ENCODE measurements at regions of chr1 and their contacts with region 1.

Region 1: DNA sequence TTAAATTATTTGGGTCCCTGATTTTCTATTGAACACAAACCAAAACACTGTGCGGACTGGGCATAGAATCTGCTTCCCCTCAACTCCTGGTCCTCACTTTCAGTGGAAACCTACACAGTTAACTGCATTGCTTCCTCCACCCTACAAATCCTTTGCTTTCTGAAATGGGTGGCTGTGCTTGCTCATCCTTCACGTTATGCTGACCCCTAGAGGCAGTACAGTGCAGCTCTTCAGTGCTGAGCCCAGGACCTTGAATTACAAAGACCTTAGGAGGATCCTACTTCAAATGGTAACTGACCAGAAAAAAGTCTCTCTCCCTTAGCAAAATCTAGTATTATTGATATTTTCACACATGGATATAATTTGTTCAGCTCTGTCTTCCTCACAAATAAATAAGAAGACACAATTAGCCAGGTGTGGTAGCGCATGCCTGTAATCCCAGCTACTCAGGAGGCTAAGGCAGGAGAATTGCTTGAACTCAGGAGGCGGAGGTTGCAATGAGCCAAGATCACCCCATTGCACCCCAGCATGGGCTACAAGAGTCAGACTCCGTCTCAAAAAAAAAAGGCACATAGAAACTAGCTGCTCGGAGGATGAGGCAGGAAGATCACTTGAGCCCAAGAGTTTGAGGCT is 63.4 kb upstream of the L1TD1 start:
- DNase-seq: peak; percentile 53
- H3K4me3 Mint-ChIP-seq: no peak overlapping the region
- H3K27ac Mint-ChIP-seq: no peak overlapping the region
- H3K4me1 Mint-ChIP-seq: no peaks in the 10 kb centered on the region
- H3K27me3 Mint-ChIP-seq: no peaks in the 10 kb centered on the region
- CTCF ChIP-seq: peak; percentile 79

Region 2: DNA sequence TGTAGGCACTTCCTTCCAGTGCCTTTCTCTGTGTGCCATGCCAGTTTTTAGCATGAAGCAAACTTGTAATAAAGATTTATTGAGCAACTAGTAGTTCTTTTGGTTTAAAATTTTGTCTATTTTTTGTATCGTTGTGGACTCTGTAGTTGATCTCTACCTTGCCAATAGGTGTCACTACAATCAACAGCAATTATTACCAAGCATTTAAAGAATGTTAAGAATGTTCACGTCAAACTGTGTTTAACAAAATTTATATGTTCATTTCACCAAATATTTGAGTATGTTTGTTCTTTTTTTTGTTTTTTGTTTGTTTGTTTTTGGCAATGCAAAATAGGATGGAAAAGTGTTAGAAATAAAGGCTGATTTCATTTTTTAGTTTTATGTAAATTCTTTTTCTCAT is 180.8 kb before region 1 on chr1:
- CTCF ChIA-PET with region 1: no interaction called
- intact Hi-C with region 1: loop called (anchors 5 kb)
- DNase-seq: no peak
- H3K4me3 Mint-ChIP-seq: no peak overlapping the region
- H3K27ac Mint-ChIP-seq: no peak overlapping the region
- H3K4me1 Mint-ChIP-seq: peaks cover 9% of the 10 kb centered on the region
- H3K27me3 Mint-ChIP-seq: no peaks in the 10 kb centered on the region
- CTCF ChIP-seq: peak; percentile 5

Region 3: DNA sequence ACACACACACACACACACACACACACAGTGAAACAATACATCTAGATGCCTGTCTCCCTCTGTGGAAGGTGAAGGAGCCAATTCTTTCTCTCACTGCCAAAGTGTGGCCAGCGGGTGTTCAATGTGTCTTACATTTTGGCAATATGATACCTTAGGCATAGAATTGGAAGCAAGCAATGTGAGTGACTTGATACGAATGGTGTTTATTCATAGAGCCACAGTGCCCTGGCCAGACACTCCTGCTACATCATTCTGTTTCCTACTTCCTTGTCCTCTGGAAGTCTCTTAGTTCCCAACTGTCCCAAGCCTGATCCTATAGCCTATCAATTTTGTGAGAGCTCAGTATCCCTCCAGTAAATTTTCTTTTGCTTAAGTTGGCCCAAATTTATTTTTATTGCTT is 106.5 kb before region 1 on chr1:
- CTCF ChIA-PET with region 1: no interaction called
- intact Hi-C with region 1: no loop called
- DNase-seq: no peak
- H3K4me3 Mint-ChIP-seq: no peak overlapping the region
- H3K27ac Mint-ChIP-seq: no peak overlapping the region
- H3K4me1 Mint-ChIP-seq: no peaks in the 10 kb centered on the region
- H3K27me3 Mint-ChIP-seq: no peaks in the 10 kb centered on the region
- CTCF ChIP-seq: no peak

Region 4: DNA sequence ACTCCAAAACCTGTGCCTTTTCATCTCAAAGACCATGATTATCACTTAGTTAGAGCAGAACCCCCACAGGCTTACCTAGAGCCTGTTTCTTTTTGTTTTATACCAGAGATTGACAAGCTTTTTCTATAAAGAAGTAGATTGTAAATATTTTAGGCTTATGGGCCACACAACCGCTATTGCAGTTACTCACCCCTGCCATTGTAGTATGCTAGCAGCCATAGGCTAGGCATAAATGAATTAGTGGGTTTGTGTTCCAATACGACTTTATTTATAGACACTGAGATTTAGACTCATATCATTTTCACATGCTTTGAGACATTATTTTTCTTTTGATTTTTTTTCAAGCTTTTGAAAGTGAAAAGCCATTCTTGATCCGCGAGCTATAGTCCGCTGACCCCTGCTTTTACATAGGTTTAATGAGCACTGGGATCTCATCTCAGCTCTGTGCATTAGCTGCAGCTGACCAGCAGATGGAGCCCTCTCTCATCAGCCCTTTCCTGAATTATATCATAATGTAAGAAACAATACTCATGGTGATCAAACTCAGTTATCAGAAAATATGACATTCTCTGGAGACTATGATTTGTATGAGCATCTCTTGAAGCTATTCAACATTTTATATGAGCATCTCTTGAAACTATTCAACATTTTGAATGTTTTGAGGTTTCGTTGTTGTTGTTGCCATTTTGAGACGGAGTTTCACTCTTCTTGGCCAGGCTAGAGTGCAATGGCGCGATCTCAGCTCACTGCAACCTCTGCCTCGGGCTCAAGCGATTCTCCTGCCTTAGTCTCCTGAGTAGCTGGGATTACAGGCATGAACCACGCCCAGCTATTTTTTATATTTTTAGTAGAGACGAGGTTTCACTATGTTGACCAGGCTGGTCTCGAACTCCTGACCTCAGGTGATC is 48.5 kb before region 1 on chr1:
- CTCF ChIA-PET with region 1: interaction called, 8 read pairs
- intact Hi-C with region 1: loop called (anchors 1 kb)
- DNase-seq: peak; percentile 58
- H3K4me3 Mint-ChIP-seq: no peak overlapping the region
- H3K27ac Mint-ChIP-seq: no peak overlapping the region
- H3K4me1 Mint-ChIP-seq: no peaks in the 10 kb centered on the region
- H3K27me3 Mint-ChIP-seq: no peaks in the 10 kb centered on the region
- CTCF ChIP-seq: peak; percentile 85

Region 5: GRCh38 chr1:62144238-62144831 is 13.1 kb after region 1 on chr1:
- CTCF ChIA-PET with region 1: interaction called, 11 read pairs
- intact Hi-C with region 1: no loop called
- DNase-seq: peak; percentile 44
- H3K4me3 Mint-ChIP-seq: no peak overlapping the region
- H3K27ac Mint-ChIP-seq: no peak overlapping the region
- H3K4me1 Mint-ChIP-seq: peaks cover 8% of the 10 kb centered on the region
- H3K27me3 Mint-ChIP-seq: no peaks in the 10 kb centered on the region
- CTCF ChIP-seq: peak; percentile 80

Region 6: GRCh38 chr1:62230709-62231108 is 99.5 kb after region 1 on chr1:
- CTCF ChIA-PET with region 1: no interaction called
- intact Hi-C with region 1: no loop called
- DNase-seq: peak; percentile 44
- H3K4me3 Mint-ChIP-seq: no peak overlapping the region
- H3K27ac Mint-ChIP-seq: no peak overlapping the region
- H3K4me1 Mint-ChIP-seq: peaks cover 16% of the 10 kb centered on the region
- H3K27me3 Mint-ChIP-seq: no peaks in the 10 kb centered on the region
- CTCF ChIP-seq: no peak